ENCODE measurements at regions of chr20 and their contacts with region 1.

Region 1: DNA sequence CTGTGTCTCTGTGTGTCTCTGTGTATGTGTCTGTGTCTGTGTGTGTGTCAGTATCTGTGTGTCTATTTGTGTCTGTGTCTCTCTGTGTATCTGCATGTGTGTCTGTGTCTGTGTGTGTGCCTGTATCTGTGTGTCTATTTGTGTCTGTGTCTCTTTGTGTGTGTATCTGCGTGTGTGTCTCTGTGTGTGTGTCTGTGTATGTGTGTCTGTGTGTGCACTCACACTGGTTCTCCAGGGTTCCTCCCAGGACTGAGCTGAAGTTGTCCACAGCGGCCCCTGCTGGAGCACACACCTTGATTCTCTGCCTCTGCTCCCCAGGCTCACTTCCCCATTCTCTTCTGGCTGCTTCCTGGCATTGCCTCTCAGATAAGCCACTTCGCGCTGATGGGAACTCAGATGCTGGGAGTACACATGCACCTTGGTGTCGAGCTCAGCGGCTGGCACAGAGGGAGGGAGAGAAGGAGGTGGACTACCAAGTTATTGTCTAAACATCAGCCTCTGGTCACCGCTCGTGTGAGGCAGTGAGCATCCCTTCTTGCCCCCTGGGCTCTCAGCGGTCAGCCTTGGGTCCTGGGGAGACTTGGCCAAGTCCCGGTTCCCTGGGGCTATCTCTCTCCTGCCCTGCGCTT is 104.9 kb upstream of the NXT1 start:
- DNase-seq: peak in 2 of 5 donors; percentile 34 to 36
- H3K4me3 ChIP-seq: no peak overlapping the region
- H3K27ac ChIP-seq: no peak overlapping the region
- H3K4me1 ChIP-seq: peaks cover 2% of the 10 kb centered on the region
- H3K27me3 ChIP-seq: no peaks in the 10 kb centered on the region
- CTCF ChIP-seq: no peak
- EP300 ChIP-seq: no peak
- POLR2A ChIP-seq: no peak

Region 2: DNA sequence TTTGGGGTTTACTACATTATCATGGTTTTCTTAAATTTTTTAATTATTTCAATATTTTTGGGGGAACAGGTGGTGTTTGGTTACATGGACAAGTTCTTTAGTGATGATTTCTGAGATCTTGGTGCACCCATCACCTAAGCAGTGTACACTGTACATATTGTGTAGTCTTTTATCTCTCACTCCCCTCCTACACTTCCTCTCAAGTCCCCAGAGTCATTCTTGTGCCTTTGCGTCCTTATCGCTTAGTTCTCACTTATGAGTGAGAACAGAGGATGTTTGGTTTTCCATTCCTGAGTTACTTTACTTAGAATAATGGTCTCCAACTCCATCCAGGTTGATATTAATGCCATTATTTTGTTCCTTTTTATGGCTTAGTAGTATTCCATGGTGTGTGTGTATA is 28.6 kb before region 1 on chr20:
- intact Hi-C with region 1: loop called in 1 of 4 experiments (anchors 1 kb)
- DNase-seq: no peak
- H3K4me3 ChIP-seq: no peak overlapping the region
- H3K27ac ChIP-seq: no peak overlapping the region
- H3K4me1 ChIP-seq: no peaks in the 10 kb centered on the region
- H3K27me3 ChIP-seq: peaks cover 4% of the 10 kb centered on the region
- CTCF ChIP-seq: no peak
- EP300 ChIP-seq: no peak
- POLR2A ChIP-seq: no peak

Region 3: DNA sequence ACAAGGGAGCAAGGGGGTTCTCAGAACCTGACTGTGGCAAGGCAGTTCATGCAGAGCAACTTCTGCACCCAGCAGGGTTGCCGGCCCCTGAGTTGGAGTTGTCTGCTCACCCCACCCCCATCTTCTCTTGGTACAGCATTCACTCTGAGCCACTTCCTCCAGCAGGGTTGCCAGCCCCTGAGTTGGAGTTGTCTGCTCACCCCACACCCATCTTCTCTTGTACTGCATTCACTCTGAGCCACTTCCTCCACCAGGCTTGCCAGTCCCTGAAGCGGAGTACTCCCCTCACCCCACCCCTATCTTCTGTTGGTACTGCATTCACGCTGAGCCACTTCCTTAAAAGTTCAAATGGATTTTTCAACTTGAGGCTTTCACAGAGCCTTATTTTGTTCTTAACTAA is 1144.0 kb after region 1 on chr20:
- intact Hi-C with region 1: no loop called
- DNase-seq: no peak
- H3K4me3 ChIP-seq: no peak overlapping the region
- H3K27ac ChIP-seq: no peak overlapping the region
- H3K4me1 ChIP-seq: no peaks in the 10 kb centered on the region
- H3K27me3 ChIP-seq: no peaks in the 10 kb centered on the region
- CTCF ChIP-seq: no peak
- EP300 ChIP-seq: no peak
- POLR2A ChIP-seq: no peak

Measured in ovary (tissue), 10 donors.